Colonic mucosa (tissue), 4 donors: ENCODE measurements at regions of chr16 and their contacts with region 1.

Region 1: DNA sequence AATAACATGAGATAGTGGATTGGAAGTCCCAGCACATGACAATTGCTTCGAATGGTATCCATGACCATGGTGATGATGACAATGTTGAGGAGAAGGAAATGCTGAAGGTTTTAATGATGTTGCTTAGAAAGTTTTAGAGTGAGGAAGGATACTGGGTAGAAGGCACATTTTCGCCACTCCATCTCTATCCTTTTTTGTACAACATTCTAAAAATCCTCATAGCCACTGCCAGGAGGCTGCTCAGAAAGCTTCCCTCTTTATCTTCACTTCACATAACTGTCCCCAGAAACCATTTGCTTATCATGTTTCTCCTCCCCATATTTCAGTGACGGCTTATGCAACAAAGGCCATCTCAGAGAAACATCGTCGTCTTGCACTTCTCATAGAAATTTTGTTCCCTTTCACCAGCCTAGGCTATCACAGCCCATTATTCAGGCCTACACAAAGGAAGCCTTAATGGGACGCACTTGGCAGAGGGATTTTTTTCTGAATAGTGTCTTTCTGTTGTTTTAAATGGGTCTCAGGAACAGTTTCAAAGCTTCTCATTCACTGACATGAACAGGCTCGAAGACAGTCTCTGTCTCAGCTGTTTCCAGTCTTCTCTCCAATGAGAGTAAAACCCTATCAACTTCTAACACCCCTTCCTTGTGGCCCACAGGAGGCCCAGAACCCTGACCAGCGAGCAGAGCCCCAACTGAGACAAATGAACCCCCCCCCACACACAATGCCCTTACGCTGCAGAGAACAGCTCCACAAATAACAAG is 506.7 kb downstream of the HAPSTR1 start:
- DNase-seq: no peak
- H3K4me3 ChIP-seq: no peak overlapping the region
- H3K27ac ChIP-seq: no peak overlapping the region
- H3K4me1 ChIP-seq: no peaks in the 10 kb centered on the region
- H3K27me3 ChIP-seq: no peaks in the 10 kb centered on the region
- CTCF ChIP-seq: no peak

Region 2: DNA sequence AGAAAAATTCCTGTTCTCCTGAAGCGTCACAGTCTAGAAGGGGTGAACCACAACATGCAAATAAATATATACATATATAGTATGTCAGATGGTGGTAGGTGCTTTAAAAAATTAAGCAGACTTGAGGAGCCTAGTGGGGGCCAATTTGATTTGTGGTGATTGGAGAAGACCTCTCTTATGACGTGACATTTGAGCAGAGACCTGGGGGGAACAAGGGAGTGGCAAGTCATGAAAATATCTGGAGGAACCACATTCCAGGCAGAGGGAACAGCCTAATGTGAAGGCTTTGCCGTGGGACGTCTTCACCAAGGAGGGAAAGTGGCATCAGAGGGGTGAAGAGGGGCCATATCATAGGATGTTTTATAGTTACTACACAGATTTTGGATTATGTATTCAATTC is 38.0 kb before region 1 on chr16:
- intact Hi-C with region 1: loop called (anchors 5 kb)
- DNase-seq: no peak
- H3K4me3 ChIP-seq: no peak overlapping the region
- H3K27ac ChIP-seq: no peak overlapping the region
- H3K4me1 ChIP-seq: no peaks in the 10 kb centered on the region
- H3K27me3 ChIP-seq: no peaks in the 10 kb centered on the region
- CTCF ChIP-seq: no peak

Region 3: GRCh38 chr16:9657641-9658040 is 59.5 kb after region 1 on chr16:
- intact Hi-C with region 1: no loop called
- DNase-seq: no peak
- H3K4me3 ChIP-seq: no peak overlapping the region
- H3K27ac ChIP-seq: no peak overlapping the region
- H3K4me1 ChIP-seq: no peaks in the 10 kb centered on the region
- H3K27me3 ChIP-seq: no peaks in the 10 kb centered on the region
- CTCF ChIP-seq: no peak